IMR-90 (cell line): ENCODE measurements at regions of chr10 and their contacts with region 1.

Region 1: DNA sequence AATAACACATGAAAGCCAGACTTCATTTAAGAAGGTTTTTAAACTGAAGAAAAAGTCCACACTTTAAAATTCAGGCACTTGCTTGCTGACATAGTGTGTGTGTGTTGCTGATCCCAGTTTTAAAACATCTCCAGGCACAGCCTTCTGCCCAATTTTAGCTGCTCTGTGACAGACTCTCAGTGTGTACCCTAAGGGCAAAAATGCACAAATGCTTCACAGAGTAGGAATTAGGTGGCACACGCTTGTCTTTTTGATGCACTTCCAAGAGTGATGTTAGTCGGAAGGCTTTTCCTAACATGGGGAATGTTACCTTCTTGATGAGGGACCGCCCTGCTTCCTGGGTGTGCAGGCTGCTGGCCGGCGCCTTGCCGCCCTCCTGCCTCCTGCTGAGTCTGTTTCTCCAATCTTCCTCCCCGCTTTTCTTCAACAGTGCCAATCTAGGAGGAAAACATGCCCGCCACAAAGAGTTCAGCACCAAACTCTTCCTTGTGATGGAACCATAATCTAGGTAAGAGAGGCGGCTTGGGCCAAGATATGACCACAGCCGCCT is 122.3 kb downstream of the SVIL start:
- DNase-seq: no peak
- ATAC-seq: no peak
- H3K4me3 ChIP-seq: no peak overlapping the region
- H3K27ac ChIP-seq: no peak overlapping the region
- H3K4me1 ChIP-seq: peaks cover 4% of the 10 kb centered on the region
- H3K27me3 ChIP-seq: no peaks in the 10 kb centered on the region
- CTCF ChIP-seq: no peak
- POLR2A ChIP-seq: no peak
- RAD21 ChIP-seq: no peak

Region 2: GRCh38 chr10:29590915-29591650 is 78.6 kb after region 1 on chr10:
- CTCF ChIA-PET with region 1: no interaction called
- POLR2A ChIA-PET with region 1: no interaction called
- dilution Hi-C with region 1: no loop called
- in situ Hi-C with region 1: no loop called
- intact Hi-C with region 1: loop called (anchors 5 kb)
- DNase-seq: no peak
- ATAC-seq: no peak
- H3K4me3 ChIP-seq: no peak overlapping the region
- H3K27ac ChIP-seq: no peak overlapping the region
- H3K4me1 ChIP-seq: peaks cover 27% of the 10 kb centered on the region
- H3K27me3 ChIP-seq: no peaks in the 10 kb centered on the region
- CTCF ChIP-seq: no peak
- POLR2A ChIP-seq: no peak
- RAD21 ChIP-seq: no peak